CD4-positive, alpha-beta T cell (primary cell): ENCODE measurements at regions of chr17 and their contacts with region 1.

Region 1: DNA sequence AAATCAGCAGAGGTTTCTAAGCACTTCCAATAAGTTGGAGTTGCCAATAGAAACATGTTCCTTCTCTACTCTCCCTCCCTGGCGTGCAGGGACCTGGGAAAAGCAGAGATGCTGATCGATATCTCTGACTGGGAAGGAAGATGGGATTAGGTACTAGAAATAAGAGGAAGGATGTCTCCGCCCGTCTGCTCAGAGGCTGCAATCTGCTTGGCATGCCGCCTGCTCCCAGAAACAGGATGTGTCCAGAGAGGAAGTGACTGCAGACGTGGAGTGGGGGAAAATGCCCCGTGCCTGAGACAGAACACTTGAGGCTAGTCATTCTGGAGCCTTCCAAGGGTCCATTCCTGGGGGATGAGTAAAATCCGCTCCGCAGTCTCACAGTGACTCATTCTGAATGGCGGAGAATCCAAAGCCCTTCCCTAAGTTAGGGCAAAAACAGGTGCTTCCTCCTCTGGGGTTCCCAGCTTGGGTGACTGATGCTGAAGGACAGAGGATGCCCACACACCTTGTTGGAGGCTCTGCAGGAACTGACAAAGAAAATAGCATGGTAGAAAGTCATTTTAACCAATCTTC is 45.0 kb upstream of the SMURF2 start:
- DNase-seq: peak in 2 of 14 experiments; percentile 44 to 47
- ATAC-seq: no peak
- H3K4me3 ChIP-seq: no peak overlapping the region
- H3K4me3 Mint-ChIP-seq: peak overlapping the region; percentile 23
- H3K27ac ChIP-seq: no peak overlapping the region
- H3K27ac Mint-ChIP-seq: peak overlapping the region; percentile 80
- H3K4me1 ChIP-seq: peaks cover 51% of the 10 kb centered on the region
- H3K4me1 Mint-ChIP-seq: peaks cover 49% of the 10 kb centered on the region
- H3K27me3 ChIP-seq: no peaks in the 10 kb centered on the region
- H3K27me3 Mint-ChIP-seq: no peaks in the 10 kb centered on the region
- CTCF ChIP-seq: no peak

Region 2: DNA sequence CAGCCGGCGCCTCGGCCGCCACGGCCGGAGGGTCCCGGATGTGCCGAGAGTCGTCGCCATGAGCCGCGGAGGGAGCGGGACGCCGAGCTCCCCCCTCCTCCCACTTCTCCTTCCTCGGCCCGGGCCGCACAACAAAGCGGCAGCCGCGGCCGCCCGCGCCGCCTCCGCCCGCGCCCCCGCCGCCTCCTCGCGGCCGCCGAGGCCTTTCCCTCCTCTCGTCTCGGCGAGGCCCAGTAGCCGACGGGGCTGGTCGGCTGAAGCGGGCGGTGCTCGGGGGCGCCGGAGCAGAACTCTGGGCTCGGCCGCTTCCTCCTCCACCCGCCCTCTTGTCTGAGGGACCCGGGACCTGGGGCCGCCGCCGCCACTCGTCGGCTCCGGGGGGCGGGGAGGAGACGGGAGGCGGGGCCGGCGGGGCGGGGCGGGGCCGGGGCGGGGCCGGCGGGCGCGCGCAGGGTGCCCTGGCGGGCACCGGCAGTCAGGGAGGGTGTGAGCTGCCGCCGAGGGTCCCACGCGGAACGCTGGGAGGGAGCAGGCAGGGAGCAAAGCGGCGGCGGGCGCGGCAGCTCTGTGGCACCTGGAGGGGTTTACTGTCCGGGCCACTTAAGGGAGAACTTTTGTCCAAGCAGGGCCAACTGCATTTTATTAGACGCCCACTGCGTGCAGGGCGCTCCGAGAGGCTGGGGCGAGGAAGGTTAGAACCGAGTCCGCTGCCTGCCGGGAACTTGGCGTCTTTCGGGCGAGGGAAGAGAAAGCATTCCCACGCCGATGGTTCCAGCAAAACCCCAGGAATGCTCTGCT is 44.9 kb before region 1 on chr17 and contains the start of gene SMURF2:
- CTCF ChIA-PET with region 1: no interaction called
- POLR2A ChIA-PET with region 1: interaction called, 30 read pairs
- intact Hi-C with region 1: loop called in 1 of 2 experiments (anchors 5 kb)
- DNase-seq: peak; percentile 59 to 88 (median 76)
- ATAC-seq: peak; percentile 80
- H3K4me3 ChIP-seq: peak within 1 kb of the TSS; percentile 87
- H3K4me3 Mint-ChIP-seq: peak within 1 kb of the TSS; percentile 98
- H3K27ac ChIP-seq: peak within 1 kb of the TSS; percentile 13 to 20
- H3K27ac Mint-ChIP-seq: peak within 1 kb of the TSS; percentile 95
- H3K4me1 ChIP-seq: peaks cover 22% of the 10 kb centered on the region
- H3K4me1 Mint-ChIP-seq: peaks cover 47% of the 10 kb centered on the region
- H3K27me3 ChIP-seq: no peaks in the 10 kb centered on the region
- H3K27me3 Mint-ChIP-seq: no peaks in the 10 kb centered on the region
- CTCF ChIP-seq: no peak
- total RNA-seq, gene SMURF2: 28.0 to 29.7 TPM

Region 3: GRCh38 chr17:64679688-64680216 is 27.4 kb before region 1 on chr17:
- CTCF ChIA-PET with region 1: no interaction called
- POLR2A ChIA-PET with region 1: no interaction called
- intact Hi-C with region 1: no loop called
- DNase-seq: no peak
- ATAC-seq: no peak
- H3K4me3 ChIP-seq: no peak overlapping the region
- H3K4me3 Mint-ChIP-seq: no peak overlapping the region
- H3K27ac ChIP-seq: no peak overlapping the region
- H3K27ac Mint-ChIP-seq: no peak overlapping the region
- H3K4me1 ChIP-seq: no peaks in the 10 kb centered on the region
- H3K4me1 Mint-ChIP-seq: no peaks in the 10 kb centered on the region
- H3K27me3 ChIP-seq: no peaks in the 10 kb centered on the region
- H3K27me3 Mint-ChIP-seq: no peaks in the 10 kb centered on the region
- CTCF ChIP-seq: no peak